Tibial artery (tissue), 4 donors: ENCODE measurements at regions of chr17 and their contacts with region 1.

Region 1: GRCh38 chr17:1673041-1673785 is 11.5 kb downstream of the PRPF8 start:
- DNase-seq: no peak
- H3K4me3 ChIP-seq: no peak overlapping the region
- H3K27ac ChIP-seq: no peak overlapping the region
- H3K4me1 ChIP-seq: peaks cover 0 to 19% (median 5%) of the 10 kb centered on the region in 4 donors
- H3K27me3 ChIP-seq: no peaks in the 10 kb centered on the region
- CTCF ChIP-seq: no peak

Region 2: DNA sequence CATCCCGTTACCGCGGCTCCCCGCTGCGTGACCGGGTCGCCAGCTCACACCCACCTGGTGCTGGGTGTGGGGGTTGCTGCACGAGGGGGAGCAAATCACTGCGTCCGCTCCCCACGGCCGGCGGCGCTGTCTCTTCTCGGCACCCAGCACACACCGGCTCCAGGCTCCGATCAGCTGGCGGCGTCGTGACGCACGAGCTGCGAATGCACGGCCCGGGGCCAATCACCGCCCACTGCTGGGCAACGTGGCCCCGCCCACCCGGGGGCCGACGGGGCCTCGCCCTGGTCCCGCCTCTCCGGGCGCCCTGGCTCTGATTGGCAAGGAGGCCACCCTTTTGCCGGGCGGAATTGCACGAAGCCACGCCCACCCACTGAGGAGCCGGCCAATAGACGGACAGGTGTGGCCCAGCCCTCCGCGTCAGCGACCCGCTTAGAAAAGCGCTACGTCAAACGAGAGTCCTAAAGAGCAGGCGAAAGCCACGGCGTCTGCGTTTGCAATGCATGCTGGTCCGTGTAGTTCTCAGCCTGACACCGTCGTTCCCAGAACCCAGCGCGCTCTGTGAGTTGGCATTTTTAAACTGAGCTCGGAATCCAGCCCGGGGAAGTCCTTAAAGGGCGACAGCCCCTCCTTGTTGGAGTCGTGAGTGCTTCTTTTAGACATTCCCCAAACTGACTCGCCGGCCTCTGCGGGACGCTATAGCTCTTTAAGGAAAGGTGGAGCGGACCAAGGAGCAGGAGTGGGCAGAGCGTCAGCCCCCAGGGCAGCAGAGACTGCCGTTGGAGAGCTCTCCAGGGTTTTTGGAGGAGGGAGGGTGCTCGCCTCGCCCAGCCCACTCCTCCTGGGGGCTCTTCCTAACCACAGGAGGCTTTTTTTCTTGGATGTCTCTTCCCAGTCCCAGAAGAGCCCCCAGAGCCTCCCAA is 43.1 kb after region 1 on chr17:
- intact Hi-C with region 1: loop called (anchors 5 kb)
- DNase-seq: peak; percentile 99 to 100
- H3K4me3 ChIP-seq: peak overlapping the region; percentile 92 to 95
- H3K27ac ChIP-seq: peak overlapping the region; percentile 98 to 100
- H3K4me1 ChIP-seq: peaks cover 0 to 53% (median 42%) of the 10 kb centered on the region in 4 donors
- H3K27me3 ChIP-seq: no peaks in the 10 kb centered on the region
- CTCF ChIP-seq: no peak

Region 3: DNA sequence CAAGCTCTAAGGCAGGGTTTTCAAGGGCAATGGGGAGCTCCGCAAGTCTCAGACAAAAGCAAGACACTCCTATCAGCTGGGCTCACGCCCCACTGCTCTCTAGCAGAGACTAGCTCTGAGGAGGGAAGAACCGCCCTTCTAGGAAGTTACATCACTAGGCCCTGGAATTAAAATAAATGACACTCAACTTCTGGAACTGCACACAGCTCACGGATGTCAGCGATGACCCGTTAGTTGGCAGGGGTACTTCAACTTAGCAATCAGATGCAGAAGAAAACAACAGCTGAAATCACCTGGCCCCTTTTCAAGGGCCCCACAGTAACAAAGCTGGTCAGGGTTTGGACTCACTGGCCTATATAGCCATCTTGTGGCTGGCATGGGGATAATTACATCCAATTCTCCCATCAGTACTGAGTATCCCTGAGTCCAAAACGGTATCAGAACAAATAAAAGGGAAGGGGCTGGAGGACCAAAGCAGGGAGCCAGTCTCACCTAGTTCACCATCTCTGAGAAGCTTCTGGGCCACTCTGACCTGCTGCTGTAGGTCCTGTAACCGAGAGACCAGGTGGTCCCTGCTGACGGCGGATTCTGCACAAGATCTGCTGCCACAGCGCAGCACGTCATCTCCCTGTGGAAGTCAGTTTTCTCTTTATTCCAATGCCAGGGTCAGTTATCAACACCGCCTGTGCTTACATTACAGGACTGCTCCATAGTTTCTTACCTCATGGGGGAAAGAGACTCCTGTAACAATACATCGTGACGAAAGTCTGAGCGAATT is 110.8 kb after region 1 on chr17:
- intact Hi-C with region 1: loop called (anchors 2 kb)
- DNase-seq: peak; percentile 96 to 97
- H3K4me3 ChIP-seq: peak overlapping the region; percentile 23
- H3K27ac ChIP-seq: peak overlapping the region; percentile 95 to 99
- H3K4me1 ChIP-seq: peaks cover 0 to 90% (median 64%) of the 10 kb centered on the region in 4 donors
- H3K27me3 ChIP-seq: no peaks in the 10 kb centered on the region
- CTCF ChIP-seq: peak; percentile 72 to 92

Region 4: GRCh38 chr17:1865252-1866037 is 192.2 kb after region 1 on chr17:
- intact Hi-C with region 1: loop called (anchors 5 kb)
- DNase-seq: no peak
- H3K4me3 ChIP-seq: no peak overlapping the region
- H3K27ac ChIP-seq: no peak overlapping the region
- H3K4me1 ChIP-seq: no peaks in the 10 kb centered on the region
- H3K27me3 ChIP-seq: no peaks in the 10 kb centered on the region
- CTCF ChIP-seq: peak; percentile 41 to 63